Activated naive CD4-positive, alpha-beta T cell treated with anti-CD3 and anti-CD28 coated beads for 36 hours (primary cell): ENCODE measurements at regions of chr5 and their contacts with region 1.

Region 1: DNA sequence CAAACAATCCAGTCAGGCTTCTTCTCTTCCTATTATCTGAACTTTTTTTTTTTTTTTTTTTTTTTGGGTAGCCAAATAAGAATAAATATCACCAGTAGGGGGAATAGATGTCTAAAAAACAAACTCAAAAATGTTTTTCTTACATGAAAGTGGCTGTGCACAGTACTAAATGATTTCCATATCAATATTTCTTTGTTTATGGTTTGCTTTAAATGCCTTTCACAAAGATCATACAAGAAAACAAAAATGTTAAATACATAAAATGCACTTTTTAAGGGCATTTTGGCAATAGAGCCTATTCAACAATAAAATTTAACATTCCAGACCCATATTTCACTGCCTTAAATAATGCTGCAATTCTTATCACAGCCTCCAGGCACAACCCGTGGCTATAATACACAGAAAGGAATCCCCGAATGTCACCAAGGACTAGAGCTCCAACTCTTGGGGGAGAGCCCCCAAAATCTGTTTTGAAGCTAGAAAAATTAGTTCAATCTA is 91.1 kb upstream of the TBCA start:
- DNase-seq: no peak
- H3K4me3 Mint-ChIP-seq: no peak overlapping the region
- H3K27ac Mint-ChIP-seq: no peak overlapping the region
- H3K4me1 Mint-ChIP-seq: no peaks in the 10 kb centered on the region
- H3K27me3 Mint-ChIP-seq: no peaks in the 10 kb centered on the region

Region 2: GRCh38 chr5:77683171-77683732 is 184.0 kb before region 1 on chr5:
- CTCF ChIA-PET with region 1: no interaction called
- intact Hi-C with region 1: no loop called
- DNase-seq: no peak
- H3K4me3 Mint-ChIP-seq: no peak overlapping the region
- H3K27ac Mint-ChIP-seq: no peak overlapping the region
- H3K4me1 Mint-ChIP-seq: no peaks in the 10 kb centered on the region
- H3K27me3 Mint-ChIP-seq: no peaks in the 10 kb centered on the region

Region 3: DNA sequence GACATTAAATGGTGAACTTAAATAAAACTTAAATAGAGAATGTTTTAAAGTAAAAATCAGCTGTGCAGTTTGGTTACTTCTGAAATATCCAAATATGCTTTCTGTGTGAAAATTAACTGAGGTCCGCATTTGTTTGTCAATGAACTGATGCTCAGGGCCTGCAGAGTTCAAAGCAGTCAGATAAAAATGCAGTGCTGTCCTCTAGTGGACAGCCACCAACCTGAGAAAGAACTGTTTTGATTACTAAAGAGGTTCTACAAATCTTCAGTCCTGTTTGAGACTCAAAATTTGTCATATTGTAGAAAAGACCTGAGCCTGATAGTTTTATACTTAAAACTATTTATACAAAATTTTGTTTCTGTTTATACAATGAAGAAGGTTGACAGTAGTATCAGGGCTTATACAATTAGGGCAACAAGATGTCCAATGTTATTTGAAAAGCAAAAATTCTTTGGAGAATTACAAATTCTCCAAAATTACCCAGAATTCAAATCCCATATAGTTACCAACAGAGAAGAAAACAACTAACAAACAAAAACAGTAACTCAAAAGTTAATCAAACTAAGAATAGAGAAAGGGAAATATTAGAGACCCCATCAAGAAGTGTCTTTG is 141.2 kb after region 1 on chr5:
- CTCF ChIA-PET with region 1: no interaction called
- intact Hi-C with region 1: loop called (anchors 1 kb)
- DNase-seq: peak; percentile 23
- H3K4me3 Mint-ChIP-seq: no peak overlapping the region
- H3K27ac Mint-ChIP-seq: no peak overlapping the region
- H3K4me1 Mint-ChIP-seq: no peaks in the 10 kb centered on the region
- H3K27me3 Mint-ChIP-seq: no peaks in the 10 kb centered on the region

Region 4: GRCh38 chr5:78213799-78214198 is 346.6 kb after region 1 on chr5:
- CTCF ChIA-PET with region 1: no interaction called
- intact Hi-C with region 1: loop called (anchors 5 kb)
- DNase-seq: no peak
- H3K4me3 Mint-ChIP-seq: no peak overlapping the region
- H3K27ac Mint-ChIP-seq: no peak overlapping the region
- H3K4me1 Mint-ChIP-seq: no peaks in the 10 kb centered on the region
- H3K27me3 Mint-ChIP-seq: no peaks in the 10 kb centered on the region

Region 5: DNA sequence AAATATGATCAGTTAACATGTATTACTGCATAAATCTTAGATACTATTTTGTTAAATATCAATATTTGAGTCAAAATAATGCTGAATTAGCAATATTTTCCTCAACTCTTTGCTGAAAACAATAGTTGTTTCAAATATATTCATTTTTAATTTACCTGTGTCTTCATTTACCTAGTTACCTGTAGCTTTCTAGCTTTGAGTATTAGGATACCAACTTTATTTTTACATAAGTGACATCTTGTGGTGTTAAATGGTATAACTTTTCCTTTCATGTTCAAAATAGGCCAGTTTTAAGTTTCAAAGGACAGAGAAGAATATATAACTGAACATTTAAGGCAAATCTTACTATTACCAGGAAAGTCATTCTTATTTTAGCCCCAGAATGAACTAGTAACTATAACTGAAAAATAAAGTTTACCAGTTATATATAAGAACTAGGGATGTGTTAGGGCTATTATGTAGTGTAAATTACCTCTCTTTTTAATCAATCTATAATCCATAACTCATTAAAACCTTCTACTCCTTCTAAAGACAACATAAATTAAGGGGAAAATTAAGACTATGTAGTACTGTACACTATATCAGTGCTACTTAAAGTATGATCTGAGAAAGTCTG is 402.0 kb after region 1 on chr5:
- CTCF ChIA-PET with region 1: no interaction called
- intact Hi-C with region 1: loop called (anchors 5 kb)
- DNase-seq: no peak
- H3K4me3 Mint-ChIP-seq: no peak overlapping the region
- H3K27ac Mint-ChIP-seq: no peak overlapping the region
- H3K4me1 Mint-ChIP-seq: peaks cover 11% of the 10 kb centered on the region
- H3K27me3 Mint-ChIP-seq: no peaks in the 10 kb centered on the region